ENCODE measurements at regions of chr7 and their contacts with region 1.

Region 1: DNA sequence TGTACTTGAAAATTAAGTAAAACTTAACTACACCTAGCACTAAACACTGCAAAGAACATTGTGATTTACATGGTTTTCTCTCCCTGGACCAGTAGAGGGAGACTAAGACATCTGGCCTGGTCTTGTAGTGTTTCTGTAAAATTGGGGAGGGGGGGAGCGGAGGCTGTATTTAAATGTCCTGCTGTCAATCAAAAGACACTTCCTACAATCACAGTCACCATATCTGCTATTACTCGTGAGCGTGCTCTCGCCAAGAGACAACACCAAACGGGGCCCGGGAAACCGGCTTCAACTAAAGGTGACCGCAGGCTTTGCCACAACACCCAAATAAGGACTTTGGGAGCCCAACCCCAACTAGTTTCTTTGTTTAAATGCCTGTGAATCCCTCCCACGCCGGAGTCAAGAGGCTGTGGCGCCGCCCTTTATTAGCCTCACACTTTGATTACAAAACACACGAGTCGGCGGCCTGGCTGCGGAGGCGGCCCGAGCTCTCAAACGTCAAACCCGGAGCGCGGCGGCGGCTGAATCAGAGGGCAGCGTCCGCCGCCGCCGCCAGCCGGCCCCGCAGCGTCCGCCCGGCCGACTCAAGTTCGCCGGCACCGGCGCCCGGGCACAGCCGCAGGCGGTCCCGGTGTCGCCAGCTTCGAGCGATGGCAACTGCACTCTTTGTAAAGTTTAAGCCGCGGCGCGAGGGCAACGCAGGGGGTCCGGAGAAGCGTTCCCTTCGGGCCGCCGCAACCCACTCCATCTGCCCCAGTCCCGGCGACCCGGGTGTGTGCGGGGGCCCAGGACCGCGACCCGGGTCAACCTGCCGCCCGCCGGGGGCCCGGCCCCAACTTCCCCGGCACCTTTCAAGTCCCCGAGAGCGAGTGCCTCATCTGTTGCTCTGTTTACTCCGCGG is 1.3 kb downstream of the KDM7A start:
- DNase-seq: peak; percentile 69 to 95 (median 92)
- ATAC-seq: peak; percentile 73
- H3K4me3 ChIP-seq: peak overlapping the region; percentile 63
- H3K4me3 Mint-ChIP-seq: peak overlapping the region; percentile 68 to 94 (median 89)
- H3K27ac ChIP-seq: peak overlapping the region; percentile 92
- H3K27ac Mint-ChIP-seq: peak overlapping the region; percentile 81 to 98 (median 93)
- H3K4me1 ChIP-seq: peaks cover 25 to 26% of the 10 kb centered on the region in 2 donors
- H3K4me1 Mint-ChIP-seq: peaks cover 29 to 61% (median 52%) of the 10 kb centered on the region in 7 donors
- H3K27me3 ChIP-seq: no peaks in the 10 kb centered on the region
- H3K27me3 Mint-ChIP-seq: peaks cover 0 to 4% (median 0%) of the 10 kb centered on the region in 5 donors

Region 2: DNA sequence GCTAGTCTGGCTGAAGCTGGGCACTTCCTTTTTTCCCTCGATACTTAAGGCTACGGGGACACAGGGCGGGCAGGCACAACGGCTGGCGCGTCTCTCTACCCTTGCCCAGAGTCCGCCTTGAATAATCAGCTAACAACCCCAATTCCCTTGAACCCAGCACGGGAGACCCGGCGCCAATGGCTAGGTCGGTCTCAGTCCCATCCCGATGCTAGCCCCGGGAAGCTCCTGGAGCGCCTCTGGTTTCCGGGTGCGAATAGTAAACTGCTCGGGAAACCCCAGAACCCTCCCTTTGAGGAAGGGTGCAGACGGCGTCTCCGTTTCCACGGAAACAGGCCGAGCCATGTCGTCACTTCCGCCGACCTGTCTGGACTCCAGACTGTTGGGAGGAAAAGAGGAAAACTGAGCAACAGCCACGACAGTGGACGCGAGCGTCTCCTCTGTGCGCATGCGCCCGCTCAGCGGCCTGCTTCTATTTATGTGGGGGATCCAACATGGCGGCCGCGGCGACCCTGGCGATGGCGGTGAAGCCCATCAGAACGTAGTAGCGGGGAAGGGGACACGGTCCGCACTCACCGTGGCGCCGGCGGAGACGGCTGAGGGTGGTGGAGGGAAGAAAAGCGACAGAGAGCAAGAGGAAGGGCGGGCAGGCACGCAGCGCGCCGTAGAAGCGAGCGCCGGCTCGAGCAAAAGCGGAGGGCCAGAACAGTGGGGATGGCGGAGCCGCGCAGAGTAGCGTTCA is 944.5 kb before region 1 on chr7 and contains the start of gene UBN2:
- CTCF ChIA-PET with region 1: no interaction called
- POLR2A ChIA-PET with region 1: no interaction called
- intact Hi-C with region 1: loop called in 1 of 2 experiments (anchors 2 kb)
- DNase-seq: peak; percentile 68 to 91 (median 76)
- ATAC-seq: peak; percentile 86
- H3K4me3 ChIP-seq: peak within 1 kb of the TSS; percentile 77
- H3K4me3 Mint-ChIP-seq: peak within 1 kb of the TSS; percentile 96 to 100 (median 99)
- H3K27ac ChIP-seq: peak within 1 kb of the TSS; percentile 85
- H3K27ac Mint-ChIP-seq: peak within 1 kb of the TSS; percentile 93 to 98 (median 96)
- H3K4me1 ChIP-seq: no peaks in the 10 kb centered on the region
- H3K4me1 Mint-ChIP-seq: peaks cover 24 to 33% (median 29%) of the 10 kb centered on the region in 7 donors
- H3K27me3 ChIP-seq: no peaks in the 10 kb centered on the region
- H3K27me3 Mint-ChIP-seq: peaks cover 0 to 36% (median 5%) of the 10 kb centered on the region in 5 donors
- total RNA-seq, gene UBN2: 16.2 to 31.2 (median 20.5) TPM

Region 3: DNA sequence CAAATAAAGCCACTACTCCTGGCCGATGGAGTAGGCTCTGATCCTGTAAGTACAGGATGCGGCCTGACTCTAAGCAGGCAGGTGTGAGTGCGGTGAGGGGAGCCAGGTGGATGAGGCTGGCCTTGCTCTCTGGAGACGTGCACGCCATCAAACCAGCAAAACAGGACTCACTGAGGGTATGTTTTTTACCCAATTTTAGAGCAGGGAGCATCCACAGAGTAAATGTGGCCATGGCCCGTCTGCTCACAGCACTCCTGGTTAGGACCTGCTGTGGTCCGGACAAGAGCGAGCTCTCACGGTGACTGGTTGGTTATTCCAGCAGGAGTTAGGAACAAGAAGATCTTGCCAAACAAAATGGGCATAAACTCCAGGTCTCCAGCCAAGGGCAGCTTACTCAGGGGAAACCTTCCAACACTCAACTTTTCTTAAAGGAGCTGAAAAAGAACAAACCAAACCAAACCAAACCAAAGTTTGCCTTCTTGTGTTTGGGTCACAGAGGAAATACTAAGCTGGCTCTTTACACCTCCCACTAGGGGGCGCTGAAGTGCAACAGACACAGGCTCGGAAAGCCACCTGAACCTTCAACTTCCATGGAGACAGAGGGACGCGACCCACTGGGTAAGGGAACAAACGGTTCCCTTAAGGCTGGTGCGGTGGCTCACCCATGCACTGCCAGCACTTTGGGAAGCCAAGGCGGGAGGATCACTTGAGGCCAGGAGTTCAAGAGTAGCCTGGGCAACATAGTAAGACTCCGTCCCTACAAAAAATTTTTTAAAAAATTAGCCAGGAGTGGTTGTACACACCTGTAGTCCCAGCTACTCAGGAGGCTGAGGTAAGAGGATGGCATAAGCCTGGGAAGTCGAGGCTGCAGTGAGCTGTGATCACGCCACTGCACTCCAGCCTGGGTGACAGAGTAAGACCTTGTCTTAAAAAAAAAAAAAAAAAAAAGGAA is 529.6 kb before region 1 on chr7:
- CTCF ChIA-PET with region 1: no interaction called
- POLR2A ChIA-PET with region 1: no interaction called
- intact Hi-C with region 1: loop called in 1 of 2 experiments (anchors 2 kb)
- DNase-seq: peak; percentile 72 to 93 (median 80)
- ATAC-seq: peak; percentile 73
- H3K4me3 ChIP-seq: no peak overlapping the region
- H3K4me3 Mint-ChIP-seq: peak overlapping the region in 8 of 10 donors; percentile 44 to 77 (median 61)
- H3K27ac ChIP-seq: no peak overlapping the region
- H3K27ac Mint-ChIP-seq: peak overlapping the region in 7 of 9 donors; percentile 46 to 92 (median 64)
- H3K4me1 ChIP-seq: peaks cover 0 to 78% of the 10 kb centered on the region in 2 donors
- H3K4me1 Mint-ChIP-seq: peaks cover 61 to 96% (median 87%) of the 10 kb centered on the region in 7 donors
- H3K27me3 ChIP-seq: no peaks in the 10 kb centered on the region
- H3K27me3 Mint-ChIP-seq: no peaks in the 10 kb centered on the region

Region 4: DNA sequence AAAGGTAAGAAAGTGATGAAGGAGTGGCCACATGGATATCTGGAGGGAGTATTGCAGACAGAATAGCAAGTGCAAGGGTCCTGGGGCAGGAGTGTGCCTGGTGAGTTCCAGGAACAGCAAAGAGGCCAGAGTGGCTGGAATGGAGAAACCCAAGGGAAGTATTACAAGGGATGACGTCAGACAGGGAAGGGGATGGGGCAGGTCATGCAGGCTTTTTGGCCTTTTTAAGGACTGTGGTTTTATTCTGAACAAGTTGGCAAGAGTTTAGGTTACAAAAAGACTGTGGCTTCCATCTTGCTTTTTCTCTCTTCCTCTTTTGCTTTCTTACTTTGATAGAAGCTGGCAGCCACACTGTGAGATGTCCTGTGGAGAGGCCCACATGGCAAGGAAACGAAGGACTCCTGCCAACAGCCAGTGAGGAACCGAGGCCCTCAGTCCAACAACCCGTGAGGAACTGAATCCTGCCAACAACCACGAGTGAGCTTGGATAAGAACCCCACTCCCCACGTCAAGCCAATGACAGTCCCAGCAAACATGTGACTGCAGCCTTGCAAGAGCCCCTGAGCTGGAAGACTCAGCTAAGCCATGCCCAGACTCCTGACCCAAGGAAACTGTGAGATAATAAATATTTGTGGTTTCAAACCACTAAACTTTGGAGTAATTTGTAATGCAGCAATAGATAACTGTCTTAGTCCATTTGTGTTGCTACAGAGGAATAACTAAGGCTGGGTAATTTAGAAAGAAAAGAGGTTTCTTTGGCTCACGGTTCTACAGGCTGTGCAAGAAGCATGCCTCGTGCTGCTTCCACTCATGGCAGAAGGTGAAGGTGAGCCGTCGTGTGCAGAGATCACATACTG is 21.1 kb after region 1 on chr7:
- CTCF ChIA-PET with region 1: no interaction called
- POLR2A ChIA-PET with region 1: interaction called, 54 read pairs
- intact Hi-C with region 1: no loop called
- DNase-seq: no peak
- ATAC-seq: no peak
- H3K4me3 ChIP-seq: no peak overlapping the region
- H3K4me3 Mint-ChIP-seq: peak overlapping the region in 1 of 10 donors; percentile 45
- H3K27ac ChIP-seq: no peak overlapping the region
- H3K27ac Mint-ChIP-seq: peak overlapping the region in 2 of 9 donors; percentile 22 to 38
- H3K4me1 ChIP-seq: no peaks in the 10 kb centered on the region
- H3K4me1 Mint-ChIP-seq: peaks cover 0 to 11% (median 4%) of the 10 kb centered on the region in 7 donors
- H3K27me3 ChIP-seq: no peaks in the 10 kb centered on the region
- H3K27me3 Mint-ChIP-seq: peaks cover 0 to 2% (median 0%) of the 10 kb centered on the region in 5 donors

Region 5: DNA sequence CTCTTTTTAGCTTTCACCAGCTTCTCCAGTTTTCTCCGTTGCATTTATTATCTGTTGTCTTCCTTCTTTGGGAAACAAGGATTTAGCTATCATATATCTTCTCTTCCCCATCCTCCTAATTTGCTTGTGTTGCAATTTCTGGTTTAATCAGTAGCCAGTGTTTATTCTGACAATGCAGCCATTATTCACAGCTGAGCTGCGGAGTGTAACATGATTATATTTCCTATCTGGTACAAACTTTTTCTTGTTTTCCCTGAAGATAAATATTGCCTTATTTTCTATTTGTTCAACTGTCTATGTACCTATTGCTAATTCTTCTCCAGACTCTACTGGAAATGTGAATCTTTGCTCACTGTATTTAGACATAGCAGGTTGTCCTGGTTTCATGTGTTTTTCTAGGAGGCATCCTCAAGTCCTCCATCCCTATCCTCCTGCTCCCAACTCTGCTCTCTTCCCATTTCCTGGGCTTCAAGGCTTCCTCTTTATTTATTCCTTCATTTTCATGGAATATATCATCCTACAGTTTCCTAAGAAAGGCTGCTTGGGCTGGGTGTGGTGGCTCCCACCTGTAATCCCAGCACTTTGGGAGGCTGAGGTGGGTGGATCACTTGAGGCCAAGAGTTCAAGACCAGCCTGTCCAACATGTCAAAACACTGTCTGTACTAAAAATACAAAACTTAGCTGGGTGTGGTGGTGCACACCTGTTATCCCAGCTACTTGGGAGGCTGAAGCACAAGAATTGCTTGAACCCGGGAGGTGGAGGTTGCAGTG is 73.8 kb after region 1 on chr7:
- CTCF ChIA-PET with region 1: no interaction called
- POLR2A ChIA-PET with region 1: interaction called, 3 read pairs
- intact Hi-C with region 1: loop called in 1 of 2 experiments (anchors 1 kb)
- DNase-seq: no peak
- ATAC-seq: no peak
- H3K4me3 ChIP-seq: no peak overlapping the region
- H3K4me3 Mint-ChIP-seq: no peak overlapping the region
- H3K27ac ChIP-seq: no peak overlapping the region
- H3K27ac Mint-ChIP-seq: no peak overlapping the region
- H3K4me1 ChIP-seq: peaks cover 0 to 21% of the 10 kb centered on the region in 2 donors
- H3K4me1 Mint-ChIP-seq: peaks cover 0 to 34% (median 5%) of the 10 kb centered on the region in 7 donors
- H3K27me3 ChIP-seq: no peaks in the 10 kb centered on the region
- H3K27me3 Mint-ChIP-seq: no peaks in the 10 kb centered on the region

Region 6: DNA sequence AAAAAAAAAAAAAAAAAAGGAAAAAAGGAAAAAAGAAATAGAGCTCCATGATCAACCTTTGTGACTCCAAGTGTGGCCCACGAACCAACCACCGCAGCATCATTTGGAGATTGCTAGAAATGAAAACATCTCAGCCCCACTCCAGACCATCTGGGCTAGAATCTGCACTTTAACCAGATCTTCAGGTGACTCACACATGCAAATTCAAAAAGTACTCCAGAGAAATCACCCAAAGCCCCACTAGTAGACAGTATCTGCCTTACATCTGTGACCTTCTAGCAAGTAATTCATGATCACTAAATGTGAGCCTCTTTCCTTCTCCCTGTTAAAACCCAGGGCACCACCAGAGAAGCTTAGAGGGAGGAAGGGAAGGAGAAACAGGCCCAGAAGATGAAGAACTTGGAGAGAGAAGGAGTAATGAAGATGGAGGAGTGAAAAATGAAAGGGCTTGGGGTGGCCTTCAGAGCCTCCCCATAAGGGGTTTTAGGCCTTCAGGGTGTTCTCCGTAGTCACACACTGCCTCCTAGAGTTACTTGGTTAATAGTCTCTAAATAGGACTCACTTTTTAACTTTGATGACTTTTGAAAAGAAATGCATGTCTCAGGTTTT is 128.8 kb after region 1 on chr7:
- CTCF ChIA-PET with region 1: interaction called, 12 read pairs
- POLR2A ChIA-PET with region 1: interaction called, 6 read pairs
- intact Hi-C with region 1: loop called (anchors 1 kb)
- DNase-seq: peak in 8 of 9 donors; percentile 30 to 75 (median 58)
- ATAC-seq: peak; percentile 93
- H3K4me3 ChIP-seq: no peak overlapping the region
- H3K4me3 Mint-ChIP-seq: peak overlapping the region in 1 of 10 donors; percentile 12
- H3K27ac ChIP-seq: no peak overlapping the region
- H3K27ac Mint-ChIP-seq: peak overlapping the region; percentile 3 to 81 (median 62)
- H3K4me1 ChIP-seq: no peaks in the 10 kb centered on the region
- H3K4me1 Mint-ChIP-seq: peaks cover 0 to 7% (median 6%) of the 10 kb centered on the region in 7 donors
- H3K27me3 ChIP-seq: no peaks in the 10 kb centered on the region
- H3K27me3 Mint-ChIP-seq: no peaks in the 10 kb centered on the region

Region 7: GRCh38 chr7:140479062-140479738 is 303.7 kb after region 1 on chr7 and contains the start of gene MKRN1:
- CTCF ChIA-PET with region 1: interaction called, 3 read pairs
- POLR2A ChIA-PET with region 1: interaction called, 8 read pairs
- intact Hi-C with region 1: loop called (anchors 1 kb)
- DNase-seq: peak; percentile 87 to 93 (median 92)
- ATAC-seq: peak; percentile 93
- H3K4me3 ChIP-seq: peak within 1 kb of the TSS; percentile 84
- H3K4me3 Mint-ChIP-seq: peak within 1 kb of the TSS; percentile 90 to 100 (median 98)
- H3K27ac ChIP-seq: peak within 1 kb of the TSS; percentile 89
- H3K27ac Mint-ChIP-seq: peak within 1 kb of the TSS; percentile 92 to 99 (median 99)
- H3K4me1 ChIP-seq: peaks cover 21 to 28% of the 10 kb centered on the region in 2 donors
- H3K4me1 Mint-ChIP-seq: peaks cover 13 to 35% (median 25%) of the 10 kb centered on the region in 7 donors
- H3K27me3 ChIP-seq: no peaks in the 10 kb centered on the region
- H3K27me3 Mint-ChIP-seq: peaks cover 0 to 15% (median 0%) of the 10 kb centered on the region in 5 donors
- total RNA-seq, gene MKRN1: 85.1 to 162 (median 144) TPM

Region 8: DNA sequence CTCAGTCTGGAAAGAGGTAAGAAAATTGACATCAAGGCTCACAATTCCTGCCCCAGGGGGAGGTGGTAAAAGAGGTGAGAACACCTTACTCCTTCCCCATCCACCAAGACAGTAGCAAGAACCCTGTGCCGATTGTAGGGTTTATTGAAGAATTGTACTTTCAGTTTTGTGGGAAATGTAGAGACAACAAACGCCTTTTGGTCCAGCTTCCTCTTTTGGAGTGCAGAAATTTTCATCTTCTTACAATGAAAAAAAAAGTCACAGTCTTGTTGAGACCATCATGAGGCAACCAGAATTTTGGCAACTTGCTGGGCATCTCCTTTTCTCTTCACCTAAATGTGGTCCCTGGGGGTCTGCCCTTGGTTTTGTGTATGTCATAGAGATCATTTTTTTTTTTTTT is 1116.1 kb after region 1 on chr7:
- CTCF ChIA-PET with region 1: no interaction called
- POLR2A ChIA-PET with region 1: no interaction called
- intact Hi-C with region 1: no loop called
- DNase-seq: no peak
- ATAC-seq: no peak
- H3K4me3 ChIP-seq: no peak overlapping the region
- H3K4me3 Mint-ChIP-seq: peak overlapping the region in 1 of 10 donors; percentile 24
- H3K27ac ChIP-seq: no peak overlapping the region
- H3K27ac Mint-ChIP-seq: no peak overlapping the region
- H3K4me1 ChIP-seq: no peaks in the 10 kb centered on the region
- H3K4me1 Mint-ChIP-seq: peaks cover 0 to 6% (median 0%) of the 10 kb centered on the region in 7 donors
- H3K27me3 ChIP-seq: no peaks in the 10 kb centered on the region
- H3K27me3 Mint-ChIP-seq: peaks cover 18 to 25% (median 20%) of the 10 kb centered on the region in 5 donors